Endothelial cell of umbilical vein (primary cell): ENCODE measurements at regions of chr11 and their contacts with region 1.

Region 1: GRCh38 chr11:20407344-20407743 is 19.8 kb downstream of the PRMT3 start:
- DNase-seq: no peak
- H3K4me3 ChIP-seq: no peak overlapping the region
- H3K27ac ChIP-seq: no peak overlapping the region
- H3K4me1 ChIP-seq: no peaks in the 10 kb centered on the region
- H3K27me3 ChIP-seq: no peaks in the 10 kb centered on the region
- CTCF ChIP-seq: no peak
- POLR2A ChIP-seq: no peak

Region 2: GRCh38 chr11:20489948-20490347 is 82.6 kb after region 1 on chr11:
- CTCF ChIA-PET with region 1: no interaction called
- POLR2A ChIA-PET with region 1: no interaction called
- dilution Hi-C with region 1: no loop called
- intact Hi-C with region 1: loop called (anchors 5 kb)
- DNase-seq: no peak
- H3K4me3 ChIP-seq: no peak overlapping the region
- H3K27ac ChIP-seq: no peak overlapping the region
- H3K4me1 ChIP-seq: peaks cover 3% of the 10 kb centered on the region
- H3K27me3 ChIP-seq: no peaks in the 10 kb centered on the region
- CTCF ChIP-seq: no peak
- POLR2A ChIP-seq: no peak